ENCODE measurements at regions of chrX and their contacts with region 1.

Region 1: GRCh38 chrX:13487731-13488523 is 81.5 kb upstream of the EGFL6 start:
- DNase-seq: no peak
- ATAC-seq: peak; percentile 59
- H3K4me3 Mint-ChIP-seq: no peak overlapping the region
- H3K27ac Mint-ChIP-seq: peak overlapping the region; percentile 89
- H3K4me1 Mint-ChIP-seq: peaks cover 21% of the 10 kb centered on the region
- H3K27me3 Mint-ChIP-seq: no peaks in the 10 kb centered on the region
- CTCF ChIP-seq: no peak

Region 2: GRCh38 chrX:12814420-12814819 is 673.5 kb before region 1 on chrX:
- CTCF ChIA-PET with region 1: interaction called, 10 read pairs
- POLR2A ChIA-PET with region 1: no interaction called
- intact Hi-C with region 1: loop called (anchors 1 kb)
- DNase-seq: no peak
- ATAC-seq: peak; percentile 71
- H3K4me3 Mint-ChIP-seq: no peak overlapping the region
- H3K27ac Mint-ChIP-seq: no peak overlapping the region
- H3K4me1 Mint-ChIP-seq: no peaks in the 10 kb centered on the region
- H3K27me3 Mint-ChIP-seq: no peaks in the 10 kb centered on the region
- CTCF ChIP-seq: no peak

Region 3: DNA sequence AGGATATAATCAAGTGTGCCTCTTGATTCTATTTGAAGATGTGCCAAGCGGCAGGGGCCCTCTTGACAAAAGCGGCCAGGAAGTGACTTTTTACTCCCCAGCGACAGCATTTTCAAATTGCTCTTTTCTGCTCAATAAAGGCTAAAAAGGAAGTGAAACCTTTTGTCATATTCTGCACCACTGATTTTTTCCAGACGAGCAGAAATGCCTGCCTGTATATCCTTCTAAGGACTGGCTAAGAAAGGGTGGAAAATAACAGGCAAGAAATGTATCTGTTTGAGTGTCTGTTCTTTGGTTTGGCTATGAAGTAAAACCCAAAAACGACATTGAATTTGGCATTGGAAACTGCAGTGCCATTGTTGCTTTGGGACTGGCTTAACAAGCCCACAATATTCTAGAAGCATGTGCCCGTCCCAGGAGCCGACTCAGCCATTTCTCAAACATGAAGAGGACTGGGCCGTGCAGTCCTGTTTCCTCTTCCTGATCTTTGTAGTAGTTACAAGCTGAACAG is 487.6 kb before region 1 on chrX:
- CTCF ChIA-PET with region 1: interaction called, 8 read pairs
- POLR2A ChIA-PET with region 1: interaction called, 5 read pairs
- intact Hi-C with region 1: loop called (anchors 1 kb)
- DNase-seq: no peak
- ATAC-seq: peak; percentile 66
- H3K4me3 Mint-ChIP-seq: peak overlapping the region; percentile 64
- H3K27ac Mint-ChIP-seq: peak overlapping the region; percentile 92
- H3K4me1 Mint-ChIP-seq: peaks cover 72% of the 10 kb centered on the region
- H3K27me3 Mint-ChIP-seq: no peaks in the 10 kb centered on the region
- CTCF ChIP-seq: no peak

Region 4: GRCh38 chrX:13283950-13284914 is 203.7 kb before region 1 on chrX:
- CTCF ChIA-PET with region 1: interaction called, 12 read pairs
- POLR2A ChIA-PET with region 1: no interaction called
- intact Hi-C with region 1: loop called (anchors 1 kb)
- DNase-seq: no peak
- ATAC-seq: no peak
- H3K4me3 Mint-ChIP-seq: no peak overlapping the region
- H3K27ac Mint-ChIP-seq: peak overlapping the region; percentile 77
- H3K4me1 Mint-ChIP-seq: peaks cover 10% of the 10 kb centered on the region
- H3K27me3 Mint-ChIP-seq: no peaks in the 10 kb centered on the region
- CTCF ChIP-seq: no peak

Region 5: DNA sequence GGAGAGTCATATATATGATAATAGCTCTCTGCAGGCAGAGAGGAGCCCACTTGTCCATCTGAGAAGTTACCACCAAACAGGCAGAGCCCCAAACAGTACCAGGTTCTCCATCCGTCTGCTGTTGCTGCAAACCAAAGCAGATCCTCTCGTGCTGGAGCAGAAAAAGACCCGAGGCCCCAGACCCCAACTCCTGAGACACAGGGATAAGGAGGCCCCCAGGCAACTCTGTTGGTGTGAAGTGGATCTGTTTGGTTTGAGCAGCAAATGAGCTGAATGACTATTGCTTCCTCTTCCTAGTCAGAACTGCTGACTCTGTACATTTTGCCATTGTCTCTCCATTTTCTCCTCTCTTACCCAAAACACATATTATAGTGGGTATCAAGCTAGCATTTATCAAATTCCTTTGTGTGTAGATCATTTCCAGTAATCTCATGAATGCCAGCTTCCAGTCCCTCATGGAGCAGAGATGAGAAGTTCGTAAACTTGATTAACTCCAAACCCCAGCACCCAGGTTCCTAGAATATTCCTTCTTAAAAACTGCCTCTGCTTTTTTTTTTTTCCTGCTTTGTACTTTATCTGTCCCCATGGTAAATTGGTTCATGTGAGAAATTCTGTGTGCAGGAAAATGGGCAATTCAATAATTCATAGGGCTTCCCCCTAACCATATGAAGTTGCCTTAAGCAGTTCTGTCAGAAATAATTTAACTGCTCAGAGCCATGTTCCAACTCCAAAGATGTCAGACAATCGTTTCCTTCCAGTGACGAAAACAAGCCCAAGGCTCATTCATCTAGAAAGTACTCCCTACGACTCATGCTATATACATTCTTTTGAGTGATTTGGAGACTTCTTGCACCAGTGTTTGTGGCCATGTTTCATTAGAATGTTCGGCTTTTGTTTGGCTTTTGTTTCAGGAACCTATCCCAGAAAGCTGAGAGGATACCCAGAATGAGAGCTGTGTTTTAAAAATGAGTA is 69.5 kb before region 1 on chrX:
- CTCF ChIA-PET with region 1: no interaction called
- POLR2A ChIA-PET with region 1: interaction called, 8 read pairs
- intact Hi-C with region 1: loop called (anchors 5 kb)
- DNase-seq: no peak
- ATAC-seq: no peak
- H3K4me3 Mint-ChIP-seq: peak overlapping the region; percentile 35
- H3K27ac Mint-ChIP-seq: peak overlapping the region; percentile 92
- H3K4me1 Mint-ChIP-seq: peaks cover 70% of the 10 kb centered on the region
- H3K27me3 Mint-ChIP-seq: no peaks in the 10 kb centered on the region
- CTCF ChIP-seq: no peak

Region 6: DNA sequence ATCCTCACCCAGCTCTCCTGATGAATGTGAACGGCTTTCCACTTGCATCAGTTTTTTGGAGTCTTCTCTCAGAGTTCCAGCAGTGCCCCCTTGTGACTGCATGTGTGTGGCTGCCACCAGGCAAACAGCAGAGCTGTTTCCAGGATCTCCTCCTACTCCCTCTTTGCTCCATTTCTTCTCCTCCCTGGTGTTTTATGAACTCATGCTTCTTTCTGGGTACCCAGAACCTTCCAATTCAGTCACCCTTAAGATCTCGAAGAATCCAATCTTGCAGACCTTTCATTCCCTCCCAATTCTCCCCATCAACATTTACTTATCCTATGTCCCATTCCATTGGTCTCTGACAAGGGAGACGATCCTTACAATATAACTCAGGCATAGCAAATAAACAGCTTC is 158.2 kb after region 1 on chrX:
- CTCF ChIA-PET with region 1: no interaction called
- POLR2A ChIA-PET with region 1: no interaction called
- intact Hi-C with region 1: loop called (anchors 5 kb)
- DNase-seq: no peak
- ATAC-seq: no peak
- H3K4me3 Mint-ChIP-seq: no peak overlapping the region
- H3K27ac Mint-ChIP-seq: no peak overlapping the region
- H3K4me1 Mint-ChIP-seq: peaks cover 3% of the 10 kb centered on the region
- H3K27me3 Mint-ChIP-seq: no peaks in the 10 kb centered on the region
- CTCF ChIP-seq: no peak

Region 7: DNA sequence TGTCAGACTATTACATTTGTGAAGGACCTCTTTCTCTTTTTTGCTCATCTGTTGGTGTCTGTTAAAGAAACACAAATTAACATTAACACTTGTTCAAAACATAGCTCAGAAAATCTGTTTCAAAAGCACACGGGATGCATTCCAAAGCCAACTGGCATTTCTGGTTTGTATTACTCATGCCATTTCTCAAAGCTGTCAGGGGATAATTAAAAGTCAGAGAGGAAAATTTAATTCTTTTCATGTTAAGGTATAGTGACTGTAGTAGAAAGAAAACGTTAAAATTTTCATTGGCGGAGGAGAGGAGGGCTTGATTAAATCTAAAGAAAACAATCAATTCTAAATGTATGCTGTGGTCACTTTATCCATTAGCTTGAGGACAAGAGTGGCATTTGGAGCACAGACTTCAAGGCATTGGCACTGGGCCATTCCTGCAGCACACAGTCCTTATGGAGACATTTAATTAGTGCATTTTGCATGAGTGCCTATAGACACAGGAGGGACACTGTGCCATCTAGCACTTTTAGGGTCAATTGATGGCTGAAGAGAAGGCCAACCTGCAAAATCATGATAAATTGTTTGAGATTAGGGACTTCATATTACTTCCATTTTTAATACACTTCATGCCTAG is 1020.3 kb after region 1 on chrX:
- CTCF ChIA-PET with region 1: no interaction called
- POLR2A ChIA-PET with region 1: no interaction called
- intact Hi-C with region 1: no loop called
- DNase-seq: no peak
- ATAC-seq: no peak
- H3K4me3 Mint-ChIP-seq: no peak overlapping the region
- H3K27ac Mint-ChIP-seq: no peak overlapping the region
- H3K4me1 Mint-ChIP-seq: no peaks in the 10 kb centered on the region
- H3K27me3 Mint-ChIP-seq: peaks cover 4% of the 10 kb centered on the region
- CTCF ChIP-seq: no peak

Measured in activated B cell treated with CpG ODN at 0.5 μM for 24 hours (primary cell).